Activated CD4-positive, alpha-beta memory T cell treated with anti-CD3 and anti-CD28 coated beads for 36 hours (primary cell): ENCODE measurements at regions of chr5 and their contacts with region 1.

Region 1: DNA sequence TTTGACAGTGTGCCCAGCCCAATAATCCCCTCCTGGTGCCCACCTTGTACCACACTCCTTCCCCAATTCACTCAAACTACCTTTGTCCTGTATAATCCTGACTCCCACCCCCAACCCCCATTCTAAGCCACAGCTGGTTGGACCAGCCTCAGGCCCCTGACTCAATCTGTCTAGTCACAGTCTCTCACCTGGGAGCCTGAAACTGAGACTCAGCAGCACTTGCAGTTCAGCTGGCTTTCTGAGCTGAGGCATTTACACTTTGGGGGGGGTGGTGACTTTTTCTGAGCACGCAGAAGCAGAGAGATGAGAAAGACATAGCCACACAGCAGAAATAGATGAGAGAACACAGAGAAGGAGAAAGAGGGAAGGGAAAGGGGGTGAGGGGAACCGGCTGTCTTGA is 247.3 kb downstream of the MAN2A1 start:
- DNase-seq: peak; percentile 69
- H3K4me3 Mint-ChIP-seq: no peak overlapping the region
- H3K27ac Mint-ChIP-seq: peak overlapping the region; percentile 57
- H3K4me1 Mint-ChIP-seq: peaks cover 17% of the 10 kb centered on the region
- H3K27me3 Mint-ChIP-seq: peaks cover 1% of the 10 kb centered on the region

Region 2: GRCh38 chr5:109857405-109858031 is 79.5 kb before region 1 on chr5:
- CTCF ChIA-PET with region 1: no interaction called
- POLR2A ChIA-PET with region 1: no interaction called
- intact Hi-C with region 1: loop called (anchors 5 kb)
- DNase-seq: peak; percentile 27
- H3K4me3 Mint-ChIP-seq: no peak overlapping the region
- H3K27ac Mint-ChIP-seq: peak overlapping the region; percentile 79
- H3K4me1 Mint-ChIP-seq: peaks cover 55% of the 10 kb centered on the region
- H3K27me3 Mint-ChIP-seq: no peaks in the 10 kb centered on the region

Region 3: DNA sequence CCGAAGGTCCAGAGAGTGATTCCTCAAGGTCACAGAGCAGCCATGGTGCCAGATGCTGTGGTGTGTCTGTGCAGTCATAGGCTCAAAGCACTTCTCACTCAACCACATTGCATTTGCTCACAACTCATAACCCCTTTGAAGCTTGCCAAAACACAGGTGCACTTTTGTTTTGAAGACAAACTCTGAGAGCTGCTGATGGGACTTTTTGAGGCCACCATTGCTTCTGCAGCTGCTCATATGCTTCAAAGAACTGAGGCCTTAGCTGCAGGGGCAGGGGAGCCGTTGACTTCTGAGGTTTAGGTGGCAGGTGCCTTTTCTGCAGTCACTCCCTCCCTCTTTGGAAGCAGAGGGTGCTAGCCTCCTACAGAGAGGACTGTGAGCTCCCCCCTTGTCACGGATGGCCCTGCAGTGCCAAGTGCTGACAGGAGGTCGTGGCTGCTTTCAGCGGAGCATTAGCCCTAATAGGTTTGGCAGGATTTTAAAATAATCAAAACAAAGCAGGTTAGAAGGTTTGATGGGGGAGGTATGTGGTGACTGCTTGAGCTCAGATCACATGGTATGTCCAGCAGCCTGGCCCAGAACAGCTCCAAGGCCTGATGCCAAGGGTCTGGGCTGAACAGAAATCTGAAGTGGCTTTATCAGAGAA is 15.1 kb before region 1 on chr5:
- CTCF ChIA-PET with region 1: no interaction called
- POLR2A ChIA-PET with region 1: interaction called, 3 read pairs
- intact Hi-C with region 1: loop called (anchors 1 kb)
- DNase-seq: peak; percentile 63
- H3K4me3 Mint-ChIP-seq: peak overlapping the region; percentile 37
- H3K27ac Mint-ChIP-seq: peak overlapping the region; percentile 86
- H3K4me1 Mint-ChIP-seq: peaks cover 32% of the 10 kb centered on the region
- H3K27me3 Mint-ChIP-seq: no peaks in the 10 kb centered on the region

Region 4: DNA sequence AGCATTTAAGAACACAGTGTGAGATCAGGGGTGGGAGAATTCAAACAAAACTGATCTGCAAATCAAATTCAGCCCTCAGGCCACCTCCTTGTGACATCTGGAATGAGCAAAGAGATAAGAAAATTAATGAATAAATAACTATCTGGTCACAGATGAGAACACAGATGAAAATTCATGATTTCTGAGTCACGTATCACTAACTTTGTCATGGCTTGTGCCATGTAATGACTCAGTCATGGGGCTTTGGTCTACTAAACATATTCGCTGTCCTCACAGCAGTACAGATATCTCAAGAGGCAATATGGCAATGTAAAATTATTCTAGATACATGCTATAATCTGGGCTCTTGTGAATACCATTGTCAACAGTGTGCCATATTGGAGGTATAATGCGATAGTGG is 27.1 kb after region 1 on chr5:
- CTCF ChIA-PET with region 1: no interaction called
- POLR2A ChIA-PET with region 1: no interaction called
- intact Hi-C with region 1: loop called (anchors 1 kb)
- DNase-seq: no peak
- H3K4me3 Mint-ChIP-seq: no peak overlapping the region
- H3K27ac Mint-ChIP-seq: no peak overlapping the region
- H3K4me1 Mint-ChIP-seq: peaks cover 12% of the 10 kb centered on the region
- H3K27me3 Mint-ChIP-seq: no peaks in the 10 kb centered on the region

Region 5: DNA sequence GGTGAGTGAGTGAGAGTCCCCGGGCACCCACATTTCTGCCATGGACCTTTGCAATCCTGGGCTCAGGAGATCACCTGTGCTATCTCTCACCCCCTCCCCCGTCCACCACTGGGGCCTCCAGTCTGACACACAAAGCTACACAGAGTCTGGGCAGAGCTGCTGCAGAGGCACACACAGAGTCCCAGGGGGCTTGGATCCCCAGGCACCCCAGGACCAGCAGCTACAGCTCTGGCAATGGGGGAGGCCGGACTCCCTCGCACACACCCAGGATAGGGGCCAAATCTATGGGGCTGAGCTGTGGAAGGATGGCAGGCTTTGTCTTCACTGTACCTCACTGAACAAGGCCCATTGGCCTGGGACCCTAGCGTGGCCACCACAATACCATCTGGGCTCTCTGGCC is 81.5 kb after region 1 on chr5:
- CTCF ChIA-PET with region 1: no interaction called
- POLR2A ChIA-PET with region 1: no interaction called
- intact Hi-C with region 1: no loop called
- DNase-seq: no peak
- H3K4me3 Mint-ChIP-seq: no peak overlapping the region
- H3K27ac Mint-ChIP-seq: no peak overlapping the region
- H3K4me1 Mint-ChIP-seq: no peaks in the 10 kb centered on the region
- H3K27me3 Mint-ChIP-seq: no peaks in the 10 kb centered on the region

Region 6: DNA sequence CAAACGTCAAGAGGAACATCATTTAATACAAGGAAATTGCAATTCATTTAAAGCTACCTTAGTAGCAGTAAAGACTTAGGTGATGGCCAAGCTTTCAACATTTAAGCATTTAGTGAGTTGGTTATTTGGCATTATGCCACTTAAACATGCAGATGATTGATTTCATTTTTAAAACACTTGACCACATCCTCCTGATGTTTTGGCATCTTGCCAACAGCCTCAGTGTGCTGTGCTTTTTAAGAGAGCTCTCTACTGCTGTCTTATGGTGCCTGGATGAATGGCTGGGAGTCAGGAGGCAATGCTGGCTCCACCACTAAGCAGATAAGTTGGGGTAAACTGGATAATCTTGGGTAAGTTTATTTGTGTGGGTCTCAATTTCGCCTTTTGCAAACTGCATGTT is 117.2 kb after region 1 on chr5:
- CTCF ChIA-PET with region 1: no interaction called
- POLR2A ChIA-PET with region 1: no interaction called
- intact Hi-C with region 1: loop called (anchors 1 kb)
- DNase-seq: peak; percentile 79
- H3K4me3 Mint-ChIP-seq: no peak overlapping the region
- H3K27ac Mint-ChIP-seq: peak overlapping the region; percentile 67
- H3K4me1 Mint-ChIP-seq: peaks cover 30% of the 10 kb centered on the region
- H3K27me3 Mint-ChIP-seq: no peaks in the 10 kb centered on the region